IMR-90 (cell line): ENCODE measurements at regions of chr13 and their contacts with region 1.

Region 1: GRCh38 chr13:24931450-24932251 is 164.3 kb upstream of the PABPC3 start:
- DNase-seq: no peak
- ATAC-seq: no peak
- H3K4me3 ChIP-seq: peak overlapping the region; percentile 20; the same call in 1 of the 2 replicates
- H3K27ac ChIP-seq: no peak overlapping the region
- H3K4me1 ChIP-seq: no peaks in the 10 kb centered on the region
- H3K27me3 ChIP-seq: peaks cover 33% of the 10 kb centered on the region
- CTCF ChIP-seq: no peak
- POLR2A ChIP-seq: no peak
- RAD21 ChIP-seq: no peak

Region 2: DNA sequence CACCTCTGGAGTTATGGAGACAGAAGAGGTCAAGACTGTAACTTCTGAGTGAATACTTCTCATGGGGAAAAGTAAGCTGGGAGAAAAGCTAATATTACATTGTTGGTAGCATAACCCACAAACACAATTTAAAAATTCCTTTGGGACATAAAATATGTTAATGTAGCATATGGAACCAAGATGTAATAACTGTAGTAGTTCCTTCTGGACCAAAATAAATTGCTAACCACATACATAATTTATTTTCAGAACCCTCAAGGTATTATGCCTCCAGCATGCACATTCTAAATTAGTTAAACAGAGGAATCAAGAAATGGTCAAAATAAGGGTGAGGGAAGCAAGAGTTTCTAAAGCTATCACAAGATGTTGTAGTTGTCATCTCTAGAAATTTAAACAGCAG is 172.5 kb before region 1 on chr13:
- CTCF ChIA-PET with region 1: no interaction called
- POLR2A ChIA-PET with region 1: no interaction called
- dilution Hi-C with region 1: no loop called
- in situ Hi-C with region 1: no loop called
- intact Hi-C with region 1: loop called (anchors 10 kb)
- DNase-seq: no peak
- ATAC-seq: no peak
- H3K4me3 ChIP-seq: no peak overlapping the region
- H3K27ac ChIP-seq: no peak overlapping the region
- H3K4me1 ChIP-seq: no peaks in the 10 kb centered on the region
- H3K27me3 ChIP-seq: peaks cover 2% of the 10 kb centered on the region
- CTCF ChIP-seq: no peak
- POLR2A ChIP-seq: no peak
- RAD21 ChIP-seq: no peak

Region 3: DNA sequence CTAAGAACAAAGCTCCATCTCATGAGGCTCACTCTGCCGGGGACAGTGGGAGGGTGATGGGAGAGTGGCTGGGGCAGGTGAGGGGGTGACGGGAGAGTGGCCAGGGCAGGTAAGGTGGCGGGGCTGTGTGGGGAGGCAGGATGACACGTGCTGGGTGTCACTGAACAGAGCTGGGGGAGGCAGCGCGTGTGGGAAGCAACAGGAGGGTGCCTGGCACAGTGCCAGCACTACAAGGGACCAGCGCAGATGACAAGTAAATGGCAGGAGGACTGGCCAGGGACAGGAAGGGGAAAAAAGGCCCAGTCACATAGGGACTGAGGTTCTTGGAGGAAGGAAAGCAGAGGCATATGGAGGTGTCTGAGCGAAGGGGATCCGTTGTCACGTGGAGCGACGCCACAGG is 37.8 kb before region 1 on chr13:
- CTCF ChIA-PET with region 1: no interaction called
- POLR2A ChIA-PET with region 1: no interaction called
- dilution Hi-C with region 1: no loop called
- in situ Hi-C with region 1: no loop called
- intact Hi-C with region 1: no loop called
- DNase-seq: no peak
- ATAC-seq: no peak
- H3K4me3 ChIP-seq: no peak overlapping the region
- H3K27ac ChIP-seq: no peak overlapping the region
- H3K4me1 ChIP-seq: no peaks in the 10 kb centered on the region
- H3K27me3 ChIP-seq: no peaks in the 10 kb centered on the region
- CTCF ChIP-seq: no peak
- POLR2A ChIP-seq: no peak
- RAD21 ChIP-seq: no peak

Region 4: GRCh38 chr13:24921003-24921402 is 10.6 kb before region 1 on chr13:
- CTCF ChIA-PET with region 1: no interaction called
- POLR2A ChIA-PET with region 1: no interaction called
- dilution Hi-C with region 1: no loop called
- in situ Hi-C with region 1: no loop called
- intact Hi-C with region 1: no loop called
- DNase-seq: no peak
- ATAC-seq: no peak
- H3K4me3 ChIP-seq: no peak overlapping the region
- H3K27ac ChIP-seq: no peak overlapping the region
- H3K4me1 ChIP-seq: peaks cover 2% of the 10 kb centered on the region; the same call in 1 of the 2 replicates
- H3K27me3 ChIP-seq: no peaks in the 10 kb centered on the region; the same call in 1 of the 2 replicates
- CTCF ChIP-seq: no peak
- POLR2A ChIP-seq: no peak
- RAD21 ChIP-seq: no peak